ENCODE measurements at regions of chr4 and their contacts with region 1.

Region 1: DNA sequence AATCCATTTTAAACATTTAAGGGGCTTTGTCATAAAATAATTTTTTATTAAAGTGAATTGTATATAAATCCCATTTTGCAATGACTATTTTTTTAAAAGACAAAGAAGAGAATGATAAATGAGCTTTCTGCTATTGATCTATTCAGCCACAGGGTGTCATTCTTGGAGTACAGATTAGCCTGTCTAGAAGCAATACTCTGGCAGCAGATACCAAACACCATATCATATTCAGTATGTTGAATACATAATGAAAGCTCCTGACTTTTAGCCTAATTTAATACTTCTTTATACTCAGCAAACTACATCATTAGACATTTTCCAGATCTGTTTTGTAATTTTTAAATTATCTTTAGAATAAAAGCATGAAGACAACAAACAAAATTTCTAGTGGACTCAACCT is 496.3 kb downstream of the PDGFC start:
- DNase-seq: peak; percentile 41
- ATAC-seq: peak; percentile 81
- H3K4me3 ChIP-seq: no peak overlapping the region
- H3K27ac ChIP-seq: no peak overlapping the region
- H3K4me1 ChIP-seq: no peaks in the 10 kb centered on the region
- H3K27me3 ChIP-seq: no peaks in the 10 kb centered on the region
- CTCF ChIP-seq: peak; percentile 46; the same call in 1 of the 2 replicates

Region 2: GRCh38 chr4:156456830-156457229 is 18.5 kb before region 1 on chr4:
- CTCF ChIA-PET with region 1: no interaction called
- POLR2A ChIA-PET with region 1: no interaction called
- in situ Hi-C with region 1: no loop called
- intact Hi-C with region 1: no loop called
- DNase-seq: no peak
- ATAC-seq: no peak
- H3K4me3 ChIP-seq: no peak overlapping the region
- H3K27ac ChIP-seq: no peak overlapping the region
- H3K4me1 ChIP-seq: no peaks in the 10 kb centered on the region
- H3K27me3 ChIP-seq: no peaks in the 10 kb centered on the region
- CTCF ChIP-seq: no peak

Region 3: GRCh38 chr4:156677131-156677531 is 201.8 kb after region 1 on chr4:
- CTCF ChIA-PET with region 1: no interaction called
- POLR2A ChIA-PET with region 1: no interaction called
- in situ Hi-C with region 1: no loop called
- intact Hi-C with region 1: loop called (anchors 1 kb)
- DNase-seq: peak; percentile 28
- ATAC-seq: peak; percentile 70; the same call in 1 of the 2 replicates
- H3K4me3 ChIP-seq: no peak overlapping the region
- H3K27ac ChIP-seq: no peak overlapping the region
- H3K4me1 ChIP-seq: no peaks in the 10 kb centered on the region
- H3K27me3 ChIP-seq: no peaks in the 10 kb centered on the region
- CTCF ChIP-seq: peak; percentile 58

Region 4: DNA sequence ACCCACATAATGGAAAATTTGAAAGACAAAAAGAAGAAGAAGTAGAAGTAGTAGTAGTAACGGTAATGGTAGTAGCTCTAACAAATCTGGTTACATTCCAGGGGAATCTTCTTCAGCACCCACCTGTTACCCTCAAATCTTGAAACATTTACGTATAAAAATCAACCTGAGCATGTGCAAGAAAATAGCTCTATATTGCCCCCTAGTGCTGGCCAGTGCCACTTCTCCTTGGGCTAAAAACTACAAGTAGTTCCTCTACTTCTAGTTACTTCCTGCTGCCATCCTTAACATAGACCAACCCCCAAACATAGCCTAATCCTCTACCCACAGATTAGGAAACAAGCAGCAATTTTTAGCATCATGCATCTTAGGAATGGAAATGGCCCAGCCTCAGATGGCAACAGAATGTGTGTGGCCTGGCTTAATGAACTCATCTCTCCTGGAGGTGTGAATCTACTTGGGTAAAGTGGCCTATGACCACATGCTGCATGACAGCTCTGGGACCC is 493.2 kb after region 1 on chr4:
- CTCF ChIA-PET with region 1: no interaction called
- POLR2A ChIA-PET with region 1: no interaction called
- in situ Hi-C with region 1: no loop called
- intact Hi-C with region 1: loop called (anchors 2 kb)
- DNase-seq: no peak
- ATAC-seq: peak; percentile 51; the same call in 1 of the 2 replicates
- H3K4me3 ChIP-seq: peak overlapping the region; percentile 68 to 93
- H3K27ac ChIP-seq: peak overlapping the region; percentile 65; the same call in 1 of the 2 replicates
- H3K4me1 ChIP-seq: peaks cover 29% of the 10 kb centered on the region
- H3K27me3 ChIP-seq: no peaks in the 10 kb centered on the region
- CTCF ChIP-seq: peak; percentile 76

Region 5: DNA sequence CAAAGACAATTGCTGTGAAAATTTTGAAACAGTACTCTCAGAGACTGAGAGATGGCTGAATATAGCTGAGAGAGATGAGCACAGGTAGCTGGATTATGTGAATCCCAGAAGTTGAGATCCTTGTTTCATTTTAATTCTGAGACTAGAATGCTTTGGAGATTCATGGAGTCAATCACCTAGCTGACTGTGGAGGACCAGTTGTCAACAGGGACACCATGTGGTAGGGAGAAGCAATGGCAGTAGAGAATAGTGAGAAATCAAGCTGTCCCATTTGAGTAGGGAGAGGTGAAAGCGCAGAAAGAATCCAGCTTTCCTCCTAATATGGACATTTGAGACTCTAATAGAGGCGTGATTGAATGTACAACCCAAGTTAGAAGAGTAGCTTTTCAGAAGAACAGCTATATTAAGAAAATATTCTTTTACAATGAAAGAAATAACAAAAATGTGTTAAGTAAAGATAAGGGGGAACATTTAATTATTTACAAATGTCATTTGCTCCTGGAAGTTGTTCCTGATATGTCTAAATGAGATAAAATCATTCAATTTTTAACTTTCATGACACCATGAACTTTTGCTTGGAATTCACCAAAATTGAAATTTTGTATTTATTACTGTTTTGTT is 570.3 kb after region 1 on chr4:
- CTCF ChIA-PET with region 1: no interaction called
- POLR2A ChIA-PET with region 1: no interaction called
- in situ Hi-C with region 1: no loop called
- intact Hi-C with region 1: loop called (anchors 1 kb)
- DNase-seq: peak; percentile 32
- ATAC-seq: peak; percentile 90
- H3K4me3 ChIP-seq: no peak overlapping the region
- H3K27ac ChIP-seq: no peak overlapping the region
- H3K4me1 ChIP-seq: peaks cover 4% of the 10 kb centered on the region; the same call in 1 of the 2 replicates
- H3K27me3 ChIP-seq: no peaks in the 10 kb centered on the region
- CTCF ChIP-seq: peak; percentile 75

Region 6: DNA sequence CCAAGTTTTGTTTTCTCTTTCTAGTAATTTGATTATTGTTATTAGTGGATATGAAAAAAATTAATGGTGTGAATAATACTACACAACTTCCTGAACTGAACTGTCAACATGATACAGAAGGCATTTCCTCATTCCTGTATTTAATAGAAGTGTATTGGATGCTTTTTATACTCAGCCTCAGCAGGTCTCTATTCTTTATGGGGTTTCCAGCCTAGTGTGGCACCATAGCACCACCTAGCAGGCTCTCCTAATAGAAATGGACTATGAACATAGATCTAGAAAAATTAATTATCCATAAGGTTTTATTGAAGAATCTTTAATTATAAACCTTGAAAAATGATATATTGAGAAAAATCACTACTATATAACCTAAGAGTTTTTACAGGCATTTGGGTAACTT is 653.1 kb after region 1 on chr4:
- CTCF ChIA-PET with region 1: no interaction called
- POLR2A ChIA-PET with region 1: no interaction called
- in situ Hi-C with region 1: no loop called
- intact Hi-C with region 1: loop called (anchors 5 kb)
- DNase-seq: peak; percentile 2
- ATAC-seq: no peak
- H3K4me3 ChIP-seq: no peak overlapping the region
- H3K27ac ChIP-seq: no peak overlapping the region
- H3K4me1 ChIP-seq: no peaks in the 10 kb centered on the region
- H3K27me3 ChIP-seq: no peaks in the 10 kb centered on the region
- CTCF ChIP-seq: peak; percentile 43; the same call in 1 of the 2 replicates